PC-9 (cell line): ENCODE measurements at regions of chr6 and their contacts with region 1.

Region 1: GRCh38 chr6:135922174-135922573 is 70.7 kb downstream of the PDE7B start:
- DNase-seq: peak; percentile 52 to 95
- H3K4me3 ChIP-seq: no peak overlapping the region; the same call in 1 of the 2 replicates
- H3K27ac ChIP-seq: peak overlapping the region; percentile 88
- H3K4me1 ChIP-seq: peaks cover 20% of the 10 kb centered on the region
- H3K27me3 ChIP-seq: no peaks in the 10 kb centered on the region
- CTCF ChIP-seq: no peak

Region 2: GRCh38 chr6:135548453-135548852 is 373.7 kb before region 1 on chr6:
- CTCF ChIA-PET with region 1: no interaction called
- POLR2A ChIA-PET with region 1: interaction called, 13 read pairs
- intact Hi-C with region 1: no loop called
- DNase-seq: no peak
- H3K4me3 ChIP-seq: no peak overlapping the region
- H3K27ac ChIP-seq: no peak overlapping the region
- H3K4me1 ChIP-seq: peaks cover 8% of the 10 kb centered on the region; the same call in 1 of the 2 replicates
- H3K27me3 ChIP-seq: no peaks in the 10 kb centered on the region
- CTCF ChIP-seq: no peak